ENCODE measurements at regions of chr13 and their contacts with region 1.

Region 1: DNA sequence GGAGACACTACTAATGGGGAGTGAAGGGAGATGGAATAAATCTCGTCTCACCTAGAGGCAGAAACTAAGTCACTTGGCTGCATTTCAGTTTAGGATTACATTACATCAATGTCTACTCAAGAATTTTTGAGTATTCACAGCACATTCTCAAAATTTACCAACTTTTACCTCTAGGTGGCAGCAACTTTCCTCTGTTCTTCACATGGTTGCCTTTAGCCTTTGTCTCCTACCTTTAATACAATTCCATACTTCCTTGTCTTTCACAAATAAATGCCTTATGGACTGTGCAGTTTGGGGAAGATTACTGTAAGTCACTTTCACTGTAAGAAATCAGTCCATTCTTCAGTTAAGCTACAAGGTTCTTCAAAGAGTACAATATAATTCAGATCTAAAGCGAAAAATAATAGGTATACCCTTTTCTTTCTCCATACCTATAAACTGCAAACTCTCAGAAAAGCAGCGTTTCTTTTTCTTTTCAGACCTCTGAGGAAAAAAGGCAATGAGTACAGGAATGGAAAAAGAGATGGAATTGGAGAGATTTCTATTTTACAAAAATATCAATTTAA is 379.4 kb downstream of the KLF12 start:
- DNase-seq: peak; percentile 59
- ATAC-seq: peak; percentile 83
- H3K4me3 ChIP-seq: no peak overlapping the region
- H3K27ac ChIP-seq: no peak overlapping the region
- H3K4me1 ChIP-seq: no peaks in the 10 kb centered on the region
- H3K27me3 ChIP-seq: no peaks in the 10 kb centered on the region
- CTCF ChIP-seq: peak; percentile 76
- EP300 ChIP-seq: no peak
- POLR2A ChIP-seq: no peak
- RAD21 ChIP-seq: peak; percentile 53; the same call in 1 of the 2 replicates

Region 2: GRCh38 chr13:73602295-73602694 is 152.5 kb before region 1 on chr13:
- CTCF ChIA-PET with region 1: no interaction called
- POLR2A ChIA-PET with region 1: no interaction called
- in situ Hi-C with region 1: no loop called
- intact Hi-C with region 1: no loop called
- DNase-seq: peak; percentile 4
- ATAC-seq: no peak
- H3K4me3 ChIP-seq: no peak overlapping the region
- H3K27ac ChIP-seq: no peak overlapping the region
- H3K4me1 ChIP-seq: peaks cover 2% of the 10 kb centered on the region
- H3K27me3 ChIP-seq: no peaks in the 10 kb centered on the region; a peak in 1 of 5 replicates
- CTCF ChIP-seq: no peak
- EP300 ChIP-seq: no peak
- POLR2A ChIP-seq: no peak
- RAD21 ChIP-seq: no peak

Region 3: DNA sequence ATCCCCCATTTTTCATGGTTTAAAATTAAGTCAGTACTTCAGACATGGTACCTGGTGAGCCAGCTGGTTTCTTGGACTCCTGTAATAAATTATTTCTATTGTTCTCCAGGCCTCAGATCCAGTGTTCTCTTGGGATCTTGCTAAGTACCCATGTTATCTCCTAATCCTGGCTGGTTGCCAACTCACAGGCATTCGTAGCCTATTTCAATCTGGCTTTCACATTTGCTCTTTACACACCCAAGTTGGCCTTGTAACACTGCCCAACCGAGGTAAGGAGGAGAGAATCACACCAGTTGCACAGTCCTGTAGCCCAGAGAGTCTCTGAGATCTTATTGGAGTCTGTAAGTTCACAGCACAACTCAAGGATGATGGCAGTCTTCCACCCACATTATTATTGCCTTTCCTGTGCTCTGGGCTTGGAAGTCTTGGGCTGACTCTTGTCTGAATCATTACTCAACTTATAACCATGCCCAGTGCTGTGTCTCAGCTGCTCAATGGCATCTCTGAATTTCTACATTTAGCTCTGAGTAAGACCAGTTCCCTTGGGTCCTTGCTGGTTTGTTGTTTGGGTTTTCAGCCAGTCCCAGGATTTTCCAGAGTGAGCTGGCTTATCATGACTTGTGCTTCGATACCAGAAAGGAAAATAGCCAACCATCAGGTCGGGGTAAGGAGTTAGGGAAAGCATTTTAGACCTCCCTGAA is 456.0 kb after region 1 on chr13:
- CTCF ChIA-PET with region 1: no interaction called
- POLR2A ChIA-PET with region 1: no interaction called
- in situ Hi-C with region 1: no loop called
- intact Hi-C with region 1: loop called (anchors 10 kb)
- DNase-seq: no peak
- ATAC-seq: no peak
- H3K4me3 ChIP-seq: no peak overlapping the region
- H3K27ac ChIP-seq: no peak overlapping the region
- H3K4me1 ChIP-seq: no peaks in the 10 kb centered on the region
- H3K27me3 ChIP-seq: no peaks in the 10 kb centered on the region
- CTCF ChIP-seq: no peak
- EP300 ChIP-seq: no peak
- POLR2A ChIP-seq: no peak
- RAD21 ChIP-seq: no peak

Region 4: GRCh38 chr13:75258159-75258782 is 1503.5 kb after region 1 on chr13:
- CTCF ChIA-PET with region 1: no interaction called
- POLR2A ChIA-PET with region 1: no interaction called
- in situ Hi-C with region 1: no loop called
- intact Hi-C with region 1: loop called (anchors 1 kb)
- DNase-seq: peak; percentile 16
- ATAC-seq: peak; percentile 53; the same call in 2 of the 3 replicates
- H3K4me3 ChIP-seq: no peak overlapping the region
- H3K27ac ChIP-seq: no peak overlapping the region
- H3K4me1 ChIP-seq: no peaks in the 10 kb centered on the region
- H3K27me3 ChIP-seq: no peaks in the 10 kb centered on the region
- CTCF ChIP-seq: peak; percentile 55
- EP300 ChIP-seq: no peak
- POLR2A ChIP-seq: no peak
- RAD21 ChIP-seq: no peak